Endothelial cell of umbilical vein (primary cell): ENCODE measurements at regions of chr17 and their contacts with region 1.

Region 1: GRCh38 chr17:1516388-1517161 is at the start of gene INPP5K:
- DNase-seq: peak; percentile 98
- H3K4me3 ChIP-seq: peak within 1 kb of the TSS; percentile 77 to 98 (median 89)
- H3K27ac ChIP-seq: peak within 1 kb of the TSS; percentile 75
- H3K4me1 ChIP-seq: peaks cover 23% of the 10 kb centered on the region
- H3K27me3 ChIP-seq: no peaks in the 10 kb centered on the region
- CTCF ChIP-seq: no peak
- POLR2A ChIP-seq: peak; percentile 86
- total RNA-seq, gene INPP5K: 41.3 and 44.2 TPM in 2 replicates

Region 2: DNA sequence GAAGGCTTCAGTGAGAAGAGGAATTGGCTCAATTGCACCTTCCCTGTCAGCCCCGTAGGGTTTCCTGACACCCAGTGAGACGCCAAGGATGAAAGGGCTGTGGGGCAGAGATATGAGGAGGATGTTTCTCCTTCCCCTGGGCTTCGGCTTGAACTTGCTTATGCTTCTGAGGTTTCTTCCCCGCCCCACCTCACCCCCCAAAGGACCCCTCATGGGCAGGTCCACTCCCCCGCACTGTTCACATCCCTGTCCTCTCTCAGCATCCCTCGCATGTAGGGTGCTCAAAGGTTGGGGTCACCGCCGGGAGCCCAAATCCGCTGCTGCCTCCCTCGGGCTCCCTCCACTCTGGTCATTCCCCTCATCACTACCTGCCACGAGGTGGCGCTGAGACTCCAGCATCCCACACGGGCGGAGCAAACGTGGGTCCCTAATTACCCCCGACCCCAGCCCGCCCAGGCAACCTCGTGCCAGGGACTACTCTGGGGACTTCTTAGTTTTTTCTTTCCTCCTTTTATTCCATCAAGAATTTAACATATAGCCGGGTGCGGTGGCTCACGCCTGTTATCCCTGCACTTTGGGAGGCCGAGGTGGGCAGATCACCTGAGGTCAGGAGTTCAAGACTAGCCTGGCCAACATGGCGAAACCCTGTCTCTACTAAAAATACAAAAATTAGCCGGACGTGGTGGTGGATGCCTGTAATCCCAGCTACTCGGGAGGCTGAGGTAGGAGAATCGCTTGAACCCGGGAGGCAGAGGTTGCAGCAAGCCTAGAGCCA is 240.4 kb before region 1 on chr17:
- CTCF ChIA-PET with region 1: interaction called, 6 read pairs
- POLR2A ChIA-PET with region 1: no interaction called
- dilution Hi-C with region 1: no loop called
- intact Hi-C with region 1: loop called (anchors 1 kb)
- DNase-seq: peak; percentile 30
- H3K4me3 ChIP-seq: no peak overlapping the region
- H3K27ac ChIP-seq: no peak overlapping the region
- H3K4me1 ChIP-seq: no peaks in the 10 kb centered on the region
- H3K27me3 ChIP-seq: peaks cover 8 to 11% of the 10 kb centered on the region in 2 experiments
- CTCF ChIP-seq: peak; percentile 50 to 90
- POLR2A ChIP-seq: no peak

Region 3: GRCh38 chr17:1399679-1400512 is 116.7 kb before region 1 on chr17 and contains the start of gene YWHAE:
- CTCF ChIA-PET with region 1: interaction called, 11 read pairs
- POLR2A ChIA-PET with region 1: no interaction called
- dilution Hi-C with region 1: no loop called
- intact Hi-C with region 1: loop called (anchors 2 kb)
- DNase-seq: peak; percentile 96
- H3K4me3 ChIP-seq: peak within 1 kb of the TSS; percentile 53 to 99 (median 77)
- H3K27ac ChIP-seq: peak within 1 kb of the TSS; percentile 86
- H3K4me1 ChIP-seq: peaks cover 17% of the 10 kb centered on the region
- H3K27me3 ChIP-seq: peaks cover 0 to under 1% of the 10 kb centered on the region in 2 experiments
- CTCF ChIP-seq: no peak
- POLR2A ChIP-seq: peak; percentile 91
- total RNA-seq, gene YWHAE: 819 and 848 TPM in 2 replicates

Region 4: DNA sequence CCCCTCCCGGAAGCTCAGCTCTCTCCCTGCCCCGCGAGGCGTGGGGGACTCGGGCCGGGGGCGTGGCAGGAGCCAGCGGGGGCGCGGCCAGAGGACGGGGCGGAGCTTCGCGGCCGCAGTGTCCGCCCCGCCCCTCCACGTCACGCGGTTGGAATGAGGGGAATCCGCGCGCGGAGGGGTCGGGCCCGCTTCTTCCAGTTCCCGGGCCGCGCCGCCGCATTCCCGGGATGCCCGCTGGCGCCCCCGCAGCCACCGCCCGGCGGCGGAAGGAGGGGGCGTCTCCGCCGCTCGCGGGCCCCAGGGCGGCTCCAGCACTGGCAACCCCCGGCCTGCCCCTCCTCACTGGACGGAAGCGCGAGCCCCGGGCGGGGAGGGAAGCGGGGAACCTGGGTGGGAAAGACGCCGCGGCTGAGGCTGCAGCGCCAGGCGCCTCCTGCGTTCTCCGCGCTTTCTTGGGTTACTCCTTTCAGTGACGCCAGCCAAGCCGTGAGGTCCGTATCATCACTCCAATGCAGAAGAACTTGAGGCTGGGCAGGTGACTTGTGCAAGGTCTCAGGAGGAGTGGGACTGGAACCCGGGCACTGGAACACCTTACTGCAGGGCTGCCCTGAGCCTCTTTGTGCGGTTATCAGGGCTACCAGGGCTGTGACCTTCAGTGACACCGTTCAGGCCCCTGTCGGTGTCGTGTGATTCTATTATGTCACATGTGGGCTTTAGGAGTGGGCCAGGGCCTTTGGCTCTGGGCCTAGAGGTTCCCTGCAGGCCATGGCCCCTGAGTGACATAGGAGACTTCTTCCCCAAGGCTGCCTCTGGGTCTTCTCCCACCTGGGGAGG is 28.3 kb before region 1 on chr17:
- CTCF ChIA-PET with region 1: interaction called, 36 read pairs
- POLR2A ChIA-PET with region 1: interaction called, 4 read pairs
- dilution Hi-C with region 1: no loop called
- intact Hi-C with region 1: loop called (anchors 1 kb)
- DNase-seq: peak; percentile 80
- H3K4me3 ChIP-seq: peak overlapping the region in 2 of 3 experiments; percentile 15 to 21
- H3K27ac ChIP-seq: peak overlapping the region; percentile 61
- H3K4me1 ChIP-seq: peaks cover 37% of the 10 kb centered on the region
- H3K27me3 ChIP-seq: no peaks in the 10 kb centered on the region
- CTCF ChIP-seq: no peak
- POLR2A ChIP-seq: peak; percentile 60

Region 5: DNA sequence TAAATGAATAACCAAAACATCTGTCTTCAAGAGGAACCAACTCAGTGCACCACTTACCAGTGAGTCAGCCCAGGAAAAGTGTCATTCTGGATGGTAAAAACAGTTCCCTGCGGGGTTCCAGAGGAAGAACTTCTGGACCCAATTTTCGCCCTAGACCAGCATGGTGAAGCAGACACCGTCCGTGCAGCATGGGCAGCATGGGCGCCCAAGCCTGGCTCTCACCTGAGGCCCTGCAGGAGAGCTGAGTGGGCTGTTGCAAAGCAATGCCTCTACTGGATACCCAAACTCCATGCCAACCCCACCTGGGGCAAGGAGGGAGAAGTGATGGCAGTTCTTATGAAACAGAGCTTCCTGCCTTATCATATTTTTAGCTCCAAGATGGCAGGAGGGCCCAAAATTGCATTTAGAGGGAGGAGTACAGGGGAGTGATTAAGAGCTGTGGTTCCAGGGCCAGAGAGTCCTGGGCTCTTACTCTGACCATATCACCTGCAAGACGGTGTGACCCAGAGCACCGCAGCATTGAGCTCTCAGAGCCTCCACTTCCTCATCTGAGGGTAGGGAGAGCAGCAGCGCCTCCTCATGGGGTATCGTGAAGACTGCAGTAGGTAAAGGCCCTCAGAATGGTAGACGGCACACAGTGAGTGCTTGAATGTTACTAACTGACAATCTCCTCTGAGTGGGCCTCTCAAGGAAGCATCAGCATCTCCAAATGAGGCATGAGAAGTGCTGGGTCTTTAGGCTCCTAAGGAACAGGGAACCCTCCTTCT is 16.4 kb after region 1 on chr17:
- CTCF ChIA-PET with region 1: interaction called, 10 read pairs
- POLR2A ChIA-PET with region 1: interaction called, 14 read pairs
- dilution Hi-C with region 1: no loop called
- intact Hi-C with region 1: no loop called
- DNase-seq: no peak
- H3K4me3 ChIP-seq: no peak overlapping the region
- H3K27ac ChIP-seq: no peak overlapping the region
- H3K4me1 ChIP-seq: no peaks in the 10 kb centered on the region
- H3K27me3 ChIP-seq: no peaks in the 10 kb centered on the region
- CTCF ChIP-seq: peak; percentile 32 to 49
- POLR2A ChIP-seq: no peak